PC-9 (cell line): ENCODE measurements at regions of chr6 and their contacts with region 1.

Region 1: GRCh38 chr6:56730663-56731529 is 88.2 kb upstream of the DST start:
- DNase-seq: peak in 1 of 2 experiments; percentile 60
- H3K4me3 ChIP-seq: no peak overlapping the region; the same call in 1 of the 2 replicates
- H3K27ac ChIP-seq: peak overlapping the region; percentile 76
- H3K4me1 ChIP-seq: peaks cover 69% of the 10 kb centered on the region
- H3K27me3 ChIP-seq: no peaks in the 10 kb centered on the region
- CTCF ChIP-seq: no peak

Region 2: GRCh38 chr6:56713254-56713672 is 17.6 kb before region 1 on chr6:
- CTCF ChIA-PET with region 1: interaction called, 3 read pairs
- POLR2A ChIA-PET with region 1: interaction called, 8 read pairs
- intact Hi-C with region 1: loop called (anchors 2 kb)
- DNase-seq: peak; percentile 68 to 97
- H3K4me3 ChIP-seq: peak overlapping the region; percentile 37; the same call in 1 of the 2 replicates
- H3K27ac ChIP-seq: peak overlapping the region; percentile 85
- H3K4me1 ChIP-seq: peaks cover 67% of the 10 kb centered on the region
- H3K27me3 ChIP-seq: no peaks in the 10 kb centered on the region
- CTCF ChIP-seq: no peak

Region 3: GRCh38 chr6:56808871-56809359 is 78.0 kb after region 1 on chr6:
- CTCF ChIA-PET with region 1: no interaction called
- POLR2A ChIA-PET with region 1: no interaction called
- intact Hi-C with region 1: loop called (anchors 1 kb)
- DNase-seq: peak; percentile 72 to 83
- H3K4me3 ChIP-seq: no peak overlapping the region
- H3K27ac ChIP-seq: peak overlapping the region; percentile 60
- H3K4me1 ChIP-seq: peaks cover 39% of the 10 kb centered on the region
- H3K27me3 ChIP-seq: no peaks in the 10 kb centered on the region
- CTCF ChIP-seq: no peak

Region 4: GRCh38 chr6:57252975-57253374 is 522.1 kb after region 1 on chr6:
- CTCF ChIA-PET with region 1: no interaction called
- POLR2A ChIA-PET with region 1: interaction called, 12 read pairs
- intact Hi-C with region 1: no loop called
- DNase-seq: no peak
- H3K4me3 ChIP-seq: no peak overlapping the region
- H3K27ac ChIP-seq: no peak overlapping the region
- H3K4me1 ChIP-seq: no peaks in the 10 kb centered on the region
- H3K27me3 ChIP-seq: no peaks in the 10 kb centered on the region
- CTCF ChIP-seq: no peak